ENCODE measurements at regions of chr5 and their contacts with region 1.

Region 1: DNA sequence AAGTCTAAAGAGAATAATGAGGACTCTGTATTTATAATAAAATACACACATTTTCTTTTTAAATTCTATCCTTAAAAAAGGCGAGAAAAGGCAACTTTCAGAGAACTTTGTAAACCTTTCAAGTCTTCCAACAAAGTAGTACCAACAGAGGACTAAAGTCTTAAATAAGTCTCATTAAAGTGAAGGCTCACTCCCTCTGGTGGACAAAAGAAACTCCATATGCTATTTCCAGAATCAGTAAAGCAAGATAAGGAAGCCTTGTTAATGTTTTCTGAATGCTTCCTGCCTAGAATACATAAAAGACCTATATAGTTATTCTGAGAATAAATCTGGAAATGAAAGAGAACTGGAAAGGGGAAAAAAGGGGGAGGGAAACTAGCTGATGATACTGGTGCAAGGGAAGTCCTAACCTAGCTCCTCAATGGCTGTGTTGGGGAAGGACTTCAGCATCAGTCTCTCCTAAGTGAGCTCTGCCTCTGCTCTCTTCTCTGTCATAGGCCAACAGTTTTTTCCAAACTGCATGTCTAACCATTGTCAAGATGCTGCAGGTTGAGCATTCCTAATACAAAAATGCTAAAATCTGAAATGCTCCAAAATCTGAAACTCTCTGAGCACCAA is 7.2 kb downstream of the HMGCS1 start:
- DNase-seq: peak in 1 of 7 donors; percentile 33
- H3K4me3 ChIP-seq: no peak overlapping the region
- H3K27ac ChIP-seq: no peak overlapping the region
- H3K4me1 ChIP-seq: peaks cover 0 to 65% of the 10 kb centered on the region in 2 donors
- H3K27me3 ChIP-seq: no peaks in the 10 kb centered on the region
- CTCF ChIP-seq: peak; percentile 44 to 76 (median 58)
- POLR2A ChIP-seq: no peak

Region 2: GRCh38 chr5:42908509-42909488 is 397.3 kb before region 1 on chr5:
- intact Hi-C with region 1: no loop called
- DNase-seq: peak; percentile 86 to 95 (median 90)
- H3K4me3 ChIP-seq: peak overlapping the region in 2 of 4 donors; percentile 38 to 61
- H3K27ac ChIP-seq: no peak overlapping the region
- H3K4me1 ChIP-seq: peaks cover 0 to 5% of the 10 kb centered on the region in 2 donors
- H3K27me3 ChIP-seq: peaks cover 8% of the 10 kb centered on the region
- CTCF ChIP-seq: peak; percentile 70 to 93 (median 88)
- POLR2A ChIP-seq: no peak

Region 3: DNA sequence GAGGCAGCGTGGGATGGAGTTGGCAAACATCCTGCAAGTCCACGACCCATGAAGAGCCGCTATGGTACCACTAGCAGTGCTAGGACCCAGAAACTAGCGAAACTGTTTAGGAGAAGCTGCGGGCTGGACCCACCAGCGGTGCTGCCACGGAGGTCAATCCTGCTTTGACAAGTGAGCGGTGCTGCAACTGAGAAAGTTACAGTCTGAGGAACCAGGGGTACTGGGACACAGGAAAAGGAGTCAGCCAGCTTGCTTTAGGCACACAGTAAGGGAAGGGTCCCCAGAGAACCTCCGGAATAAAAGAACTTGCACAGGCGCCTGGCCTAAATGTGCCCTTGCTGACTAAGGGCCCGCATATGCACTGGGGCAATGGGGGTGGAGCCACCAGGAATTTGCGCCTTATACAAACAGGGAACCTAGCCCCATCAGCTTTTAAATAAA is 242.3 kb before region 1 on chr5:
- intact Hi-C with region 1: no loop called
- DNase-seq: peak in 2 of 7 donors; percentile 35 to 41
- H3K4me3 ChIP-seq: peak overlapping the region in 1 of 4 donors; percentile 67
- H3K27ac ChIP-seq: peak overlapping the region in 3 of 5 donors; percentile 31 to 99 (median 82)
- H3K4me1 ChIP-seq: peaks cover 12 to 13% of the 10 kb centered on the region in 2 donors
- H3K27me3 ChIP-seq: no peaks in the 10 kb centered on the region
- CTCF ChIP-seq: no peak
- POLR2A ChIP-seq: no peak

Region 4: DNA sequence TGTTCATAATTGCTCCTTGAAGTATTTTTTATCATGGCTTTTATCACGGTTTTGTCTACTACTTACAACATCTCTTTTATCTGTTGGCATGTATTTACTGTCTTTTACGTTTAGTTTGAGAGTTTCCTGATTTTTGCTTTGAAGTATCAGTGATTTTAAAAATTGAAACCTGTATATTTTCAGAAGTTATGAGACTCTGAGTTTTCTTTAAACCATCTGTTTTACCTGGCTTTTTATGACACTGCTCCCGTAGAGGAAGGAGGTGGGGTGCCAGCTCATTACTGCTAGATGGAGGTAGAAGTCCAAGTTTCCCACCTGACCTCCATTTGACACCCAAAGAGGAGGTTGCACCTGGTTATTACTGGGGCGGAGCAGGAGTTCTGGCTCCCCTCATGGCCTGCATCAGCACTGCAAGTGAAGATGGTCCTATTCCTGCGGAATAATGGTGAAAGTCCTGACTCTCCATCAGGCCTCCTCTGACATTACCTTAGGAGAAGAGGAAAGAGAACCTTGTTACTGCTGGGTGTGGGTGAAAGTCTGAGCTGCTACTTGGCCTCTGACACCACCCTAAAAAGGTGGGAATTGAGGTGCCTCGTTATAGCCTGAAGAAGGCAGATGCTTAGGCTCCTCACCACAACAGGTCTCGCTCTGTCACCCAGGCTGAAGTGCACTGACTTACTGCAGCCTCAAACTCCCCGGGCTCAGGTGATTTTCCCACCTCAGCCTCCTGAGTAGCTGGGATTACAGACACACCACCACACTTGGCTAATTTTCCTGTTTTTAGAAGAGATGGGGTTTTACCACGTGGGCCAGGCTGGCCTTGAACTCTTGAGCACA is 195.2 kb before region 1 on chr5:
- intact Hi-C with region 1: loop called in 1 of 2 experiments (anchors 10 kb)
- DNase-seq: no peak
- H3K4me3 ChIP-seq: no peak overlapping the region
- H3K27ac ChIP-seq: no peak overlapping the region
- H3K4me1 ChIP-seq: no peaks in the 10 kb centered on the region
- H3K27me3 ChIP-seq: no peaks in the 10 kb centered on the region
- CTCF ChIP-seq: no peak
- POLR2A ChIP-seq: no peak